Activated CD4-positive, alpha-beta memory T cell treated with anti-CD3 and anti-CD28 coated beads, Interleukin-2, amount 10 ng/mL, durations not matched to agents 7 days and 5 days (primary cell): ENCODE measurements at regions of chr4 and their contacts with region 1.

Region 1: DNA sequence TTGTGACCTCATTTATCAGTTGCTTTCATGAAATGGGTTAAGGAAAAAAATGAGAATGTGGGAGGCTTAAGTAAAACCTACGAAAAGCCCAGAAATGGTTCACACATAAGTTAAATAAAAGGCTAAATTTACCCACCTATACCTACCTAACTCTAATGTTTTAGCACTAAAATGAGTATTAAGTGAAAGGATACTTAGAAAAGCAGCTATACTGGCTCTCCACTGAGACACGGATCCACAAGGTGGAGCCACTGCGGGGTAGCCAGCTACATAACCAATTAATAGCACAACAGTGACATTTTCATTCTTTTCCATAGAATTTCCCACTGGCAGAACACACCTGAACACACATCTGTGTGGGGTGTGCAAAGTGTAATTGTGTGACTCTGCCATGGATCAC is 101.9 kb downstream of the MAML3 start:
- DNase-seq: peak; percentile 50
- H3K4me3 Mint-ChIP-seq: no peak overlapping the region
- H3K27ac Mint-ChIP-seq: no peak overlapping the region
- H3K4me1 Mint-ChIP-seq: peaks cover 39% of the 10 kb centered on the region
- H3K27me3 Mint-ChIP-seq: peaks cover 59% of the 10 kb centered on the region

Region 2: DNA sequence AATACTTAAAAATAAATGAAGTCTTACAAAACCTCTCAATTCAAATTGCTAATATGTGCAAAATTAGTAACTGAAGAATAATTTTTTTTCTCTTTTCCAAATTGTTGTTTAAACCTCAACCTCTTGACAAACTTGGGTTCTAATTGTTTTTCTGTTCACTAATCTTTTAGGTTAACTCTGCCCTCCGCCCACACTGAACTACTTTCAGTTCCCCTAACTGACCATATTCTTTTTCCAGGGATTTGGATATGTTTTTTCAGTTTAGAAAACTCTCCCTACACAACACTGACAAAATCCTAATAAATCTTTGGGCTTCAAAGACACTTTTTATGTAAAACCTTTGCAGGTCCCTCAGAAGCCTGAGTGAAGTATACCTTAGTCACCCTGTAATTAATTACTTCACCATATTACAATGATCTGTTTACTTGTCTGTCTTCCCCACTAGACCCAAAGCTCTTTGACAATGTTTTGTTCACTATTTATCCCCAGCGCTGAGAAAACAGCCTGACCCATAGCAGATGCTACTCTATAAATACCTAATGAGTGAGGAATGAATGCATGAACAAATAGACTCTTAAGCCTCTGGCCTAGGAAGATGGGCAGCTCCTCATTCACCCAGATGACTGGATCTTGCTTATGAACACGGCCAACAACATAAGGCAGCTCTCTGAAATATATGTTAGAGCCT is 33.0 kb before region 1 on chr4:
- CTCF ChIA-PET with region 1: no interaction called
- POLR2A ChIA-PET with region 1: no interaction called
- DNase-seq: no peak
- H3K4me3 Mint-ChIP-seq: no peak overlapping the region
- H3K27ac Mint-ChIP-seq: no peak overlapping the region
- H3K4me1 Mint-ChIP-seq: no peaks in the 10 kb centered on the region
- H3K27me3 Mint-ChIP-seq: peaks cover 26% of the 10 kb centered on the region

Region 3: GRCh38 chr4:140071806-140072205 is 19.8 kb after region 1 on chr4:
- CTCF ChIA-PET with region 1: interaction called, 27 read pairs
- POLR2A ChIA-PET with region 1: interaction called, 4 read pairs
- DNase-seq: peak; percentile 80
- H3K4me3 Mint-ChIP-seq: peak overlapping the region; percentile 34
- H3K27ac Mint-ChIP-seq: peak overlapping the region; percentile 48
- H3K4me1 Mint-ChIP-seq: peaks cover 51% of the 10 kb centered on the region
- H3K27me3 Mint-ChIP-seq: peaks cover 29% of the 10 kb centered on the region

Region 4: DNA sequence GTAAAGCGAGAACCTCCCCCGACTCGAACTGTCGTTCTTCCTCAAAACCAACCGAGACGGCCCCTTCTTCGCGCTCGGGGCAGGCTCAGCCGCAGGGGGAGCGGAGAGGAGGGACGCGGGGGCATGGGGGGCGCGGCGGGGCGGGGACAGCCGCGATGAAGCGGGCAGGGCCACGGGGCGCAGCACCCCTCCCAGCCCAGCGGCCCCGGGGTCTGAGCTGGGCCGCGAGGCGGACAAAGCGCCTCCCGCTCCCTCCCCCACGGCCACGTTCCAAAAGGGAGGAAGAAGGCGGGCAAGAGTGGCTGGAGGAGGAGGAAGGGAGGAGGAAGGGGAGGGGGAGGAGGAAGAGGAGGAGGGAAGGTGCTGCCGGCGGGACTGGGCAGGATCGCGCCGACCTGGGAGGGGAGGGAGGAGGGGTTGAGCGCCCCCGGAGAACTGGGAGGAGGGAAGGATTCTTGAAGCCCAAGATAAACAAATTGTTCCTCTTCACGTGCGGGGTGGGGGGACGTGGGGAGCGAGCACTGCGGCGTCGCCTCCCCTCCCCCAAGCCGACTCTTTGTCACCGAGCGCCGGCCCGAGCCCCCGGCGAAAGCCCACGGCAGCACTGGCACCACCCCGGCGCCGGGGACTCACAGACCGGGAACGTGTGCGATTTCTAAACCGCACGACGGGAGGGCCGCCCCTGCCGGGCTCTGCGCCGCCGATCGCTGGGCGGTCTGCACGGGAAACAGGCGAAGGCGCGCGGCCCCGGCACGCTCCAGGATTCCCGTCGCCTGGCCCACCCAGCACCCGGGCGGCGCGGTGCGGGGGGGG is 99.0 kb after region 1 on chr4:
- CTCF ChIA-PET with region 1: interaction called, 12 read pairs
- POLR2A ChIA-PET with region 1: interaction called, 4 read pairs
- DNase-seq: peak; percentile 50
- H3K4me3 Mint-ChIP-seq: peak overlapping the region; percentile 91
- H3K27ac Mint-ChIP-seq: peak overlapping the region; percentile 78
- H3K4me1 Mint-ChIP-seq: peaks cover 38% of the 10 kb centered on the region
- H3K27me3 Mint-ChIP-seq: peaks cover 61% of the 10 kb centered on the region